ENCODE measurements at regions of chr5 and their contacts with region 1.

Region 1: GRCh38 chr5:62305715-62306322 is at the start of gene KIF2A:
- DNase-seq: peak; percentile 72 to 98 (median 86)

Region 2: GRCh38 chr5:61758711-61759495 is 546.9 kb before region 1 on chr5:
- intact Hi-C with region 1: no loop called
- DNase-seq: no peak

Region 3: GRCh38 chr5:62354028-62354874 is 48.4 kb after region 1 on chr5:
- intact Hi-C with region 1: loop called (anchors 2 kb)
- DNase-seq: no peak

Region 4: DNA sequence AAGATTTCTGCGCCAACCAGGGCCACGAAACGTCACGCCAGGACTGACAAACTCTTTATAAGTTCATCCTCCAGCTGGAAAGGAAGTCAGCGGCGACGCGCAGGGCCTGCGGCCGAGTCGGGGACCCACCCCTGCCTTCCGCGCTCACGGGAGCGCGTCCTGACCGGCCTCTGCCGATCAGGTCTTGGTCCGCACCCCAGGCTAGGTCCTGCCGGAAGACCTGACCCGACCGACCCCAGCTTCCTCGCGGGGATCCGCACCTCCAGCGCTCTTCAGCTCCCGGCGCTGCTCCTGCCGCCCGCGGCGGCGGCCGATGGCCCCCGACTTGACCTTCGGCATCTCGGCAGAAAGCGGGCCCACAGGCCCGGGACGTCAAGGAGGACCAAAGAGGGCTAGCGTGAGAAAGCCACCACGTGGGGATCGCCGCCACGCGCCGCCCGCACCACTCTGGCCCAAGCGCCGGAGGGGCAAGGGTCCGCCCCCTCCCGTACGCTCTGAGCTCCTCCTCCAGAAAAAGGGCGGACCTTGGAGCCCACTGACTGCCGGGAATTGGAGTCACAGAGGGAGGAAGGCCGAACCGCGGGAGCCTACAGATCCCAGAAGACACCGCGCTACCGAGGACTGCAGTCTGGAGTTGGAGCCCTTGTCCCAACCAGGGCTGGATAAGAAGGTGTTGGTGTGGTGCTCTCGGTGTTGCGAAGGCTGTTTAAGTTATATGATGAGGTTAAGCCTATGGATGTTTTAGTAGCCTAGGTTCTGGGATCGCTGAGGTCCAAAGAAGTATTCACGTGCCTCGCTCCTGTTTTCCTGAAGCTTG is 97.8 kb after region 1 on chr5 and contains the start of gene DIMT1:
- intact Hi-C with region 1: loop called (anchors 5 kb)
- DNase-seq: peak; percentile 95 to 100 (median 97)

Measured in posterior cingulate gyrus (tissue), 11 donors.